ENCODE measurements at regions of chr22 and their contacts with region 1.

Region 1: DNA sequence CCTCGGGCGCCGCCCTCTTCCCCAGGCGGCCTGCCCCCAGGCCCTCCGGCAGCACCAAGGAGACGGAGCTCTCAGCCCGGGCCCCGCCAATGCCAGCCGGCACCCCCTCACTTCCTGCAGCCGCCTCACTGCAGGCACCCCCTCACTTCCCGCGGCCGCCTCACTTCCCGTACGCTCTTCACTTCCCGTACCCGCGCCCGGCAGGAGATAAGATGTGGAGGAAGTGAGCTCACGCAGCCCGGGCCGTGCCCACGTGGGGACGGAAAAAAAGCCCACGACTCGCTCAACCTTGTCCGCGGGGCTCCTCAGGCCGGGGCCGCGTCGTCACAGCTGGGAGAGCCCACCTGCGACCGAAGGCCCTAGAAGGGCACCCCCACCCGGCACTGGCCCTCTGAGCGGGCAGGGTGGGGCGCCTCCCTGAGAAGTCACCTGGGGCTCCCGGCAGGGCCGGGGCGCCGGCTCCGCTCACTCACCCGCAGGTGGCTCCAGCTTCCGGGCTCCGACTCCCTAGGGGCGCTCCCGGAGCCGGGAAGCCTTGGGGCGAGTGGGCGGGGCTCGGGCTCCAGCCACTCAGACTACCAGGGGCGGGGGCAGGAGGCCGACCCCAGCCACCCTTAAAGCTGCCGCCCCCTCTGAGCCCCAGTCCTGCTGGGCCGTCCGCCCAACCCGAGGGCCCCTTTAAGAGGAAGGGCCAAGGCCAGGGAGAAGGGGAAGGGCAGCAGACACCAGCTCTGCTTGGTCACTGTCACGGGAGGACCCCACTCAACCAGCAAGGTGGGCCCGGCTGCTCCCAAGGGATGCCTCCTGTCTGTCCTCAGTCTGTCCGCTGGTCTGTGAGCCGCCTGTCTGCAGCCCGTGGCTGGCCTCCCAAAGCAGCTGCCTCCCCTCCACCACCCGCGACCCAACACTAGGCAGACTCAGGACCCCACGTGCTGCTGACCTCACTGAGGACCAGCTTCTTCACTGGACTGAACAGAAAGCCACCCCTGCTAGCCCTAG is 31.4 kb downstream of the PISD start:
- DNase-seq: peak; percentile 93
- ATAC-seq: peak; percentile 82
- H3K4me3 Mint-ChIP-seq: peak overlapping the region; percentile 81
- H3K27ac Mint-ChIP-seq: peak overlapping the region; percentile 89
- H3K4me1 Mint-ChIP-seq: peaks cover 60% of the 10 kb centered on the region
- H3K27me3 Mint-ChIP-seq: no peaks in the 10 kb centered on the region

Region 2: GRCh38 chr22:31107178-31107893 is 523.3 kb before region 1 on chr22 and contains the start of gene SELENOM:
- CTCF ChIA-PET with region 1: no interaction called
- POLR2A ChIA-PET with region 1: no interaction called
- intact Hi-C with region 1: loop called in 1 of 2 experiments (anchors 5 kb)
- DNase-seq: peak; percentile 94
- ATAC-seq: peak; percentile 96
- H3K4me3 Mint-ChIP-seq: peak within 1 kb of the TSS; percentile 74
- H3K27ac Mint-ChIP-seq: peak within 1 kb of the TSS; percentile 60
- H3K4me1 Mint-ChIP-seq: peaks cover 19% of the 10 kb centered on the region
- H3K27me3 Mint-ChIP-seq: no peaks in the 10 kb centered on the region
- total RNA-seq, gene SELENOM: 8.8 to 12.2 TPM

Region 3: DNA sequence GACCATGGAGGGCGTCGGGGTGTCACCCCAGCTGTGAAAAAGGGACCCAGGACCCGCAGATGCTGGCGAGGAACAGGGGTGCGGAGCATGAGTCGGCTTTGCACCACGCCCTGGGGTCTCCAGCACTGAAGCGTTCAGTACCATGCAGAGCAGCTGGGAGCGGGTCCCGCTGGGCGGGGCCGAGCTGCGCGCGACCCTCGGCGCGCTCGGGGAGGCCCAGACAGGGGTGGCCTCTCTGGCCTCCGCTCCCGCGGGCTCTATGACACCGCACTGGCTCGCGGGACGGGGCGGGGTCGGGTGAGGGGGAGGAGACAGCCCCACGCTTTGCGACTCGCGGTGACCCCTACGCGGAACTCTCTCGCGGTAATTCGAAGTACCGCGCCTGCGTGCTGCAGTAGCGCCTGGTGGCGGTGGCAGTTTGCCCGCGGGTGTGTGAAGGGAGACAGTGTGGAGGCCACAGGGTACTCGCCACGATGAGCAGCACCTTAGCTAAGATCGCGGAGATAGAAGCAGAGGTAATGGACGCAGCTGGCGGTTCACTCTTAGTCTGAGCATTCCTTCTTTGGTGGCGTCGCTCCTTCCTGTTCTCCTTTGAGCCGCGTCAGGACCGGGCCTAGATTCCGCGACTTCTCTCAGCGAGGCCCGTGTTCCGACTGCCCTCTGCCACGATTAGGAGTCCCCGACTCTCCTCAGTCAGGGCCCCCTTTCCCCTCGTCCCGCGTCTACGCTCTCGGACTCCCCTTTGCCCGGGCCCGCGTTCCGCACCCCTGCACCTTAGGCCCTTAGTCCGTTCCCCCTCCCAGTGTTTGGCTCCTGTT is 231.2 kb before region 1 on chr22 and contains the start of gene DRG1:
- CTCF ChIA-PET with region 1: no interaction called
- POLR2A ChIA-PET with region 1: no interaction called
- intact Hi-C with region 1: loop called in 1 of 2 experiments (anchors 1 kb)
- DNase-seq: peak; percentile 99
- ATAC-seq: peak; percentile 98
- H3K4me3 Mint-ChIP-seq: peak within 1 kb of the TSS; percentile 99
- H3K27ac Mint-ChIP-seq: peak within 1 kb of the TSS; percentile 91
- H3K4me1 Mint-ChIP-seq: peaks cover 18% of the 10 kb centered on the region
- H3K27me3 Mint-ChIP-seq: peaks cover under 1% of the 10 kb centered on the region
- total RNA-seq, gene DRG1: 104 to 106 TPM

Region 4: GRCh38 chr22:31489604-31490495 is 140.8 kb before region 1 on chr22 and contains the start of gene EIF4ENIF1:
- CTCF ChIA-PET with region 1: interaction called, 5 read pairs
- POLR2A ChIA-PET with region 1: interaction called, 7 read pairs
- intact Hi-C with region 1: loop called in 1 of 2 experiments (anchors 2 kb)
- DNase-seq: peak; percentile 92
- ATAC-seq: peak; percentile 75
- H3K4me3 Mint-ChIP-seq: peak within 1 kb of the TSS; percentile 86
- H3K27ac Mint-ChIP-seq: peak within 1 kb of the TSS; percentile 99
- H3K4me1 Mint-ChIP-seq: peaks cover 46% of the 10 kb centered on the region
- H3K27me3 Mint-ChIP-seq: no peaks in the 10 kb centered on the region
- total RNA-seq, gene EIF4ENIF1: 45.4 to 75.0 TPM

Region 5: GRCh38 chr22:31561238-31561887 is 69.3 kb before region 1 on chr22:
- CTCF ChIA-PET with region 1: interaction called, 6 read pairs
- POLR2A ChIA-PET with region 1: no interaction called
- intact Hi-C with region 1: loop called (anchors 1 to 2 kb)
- DNase-seq: peak; percentile 81
- ATAC-seq: peak; percentile 96
- H3K4me3 Mint-ChIP-seq: no peak overlapping the region
- H3K27ac Mint-ChIP-seq: peak overlapping the region; percentile 43
- H3K4me1 Mint-ChIP-seq: peaks cover 2% of the 10 kb centered on the region
- H3K27me3 Mint-ChIP-seq: no peaks in the 10 kb centered on the region

Region 6: DNA sequence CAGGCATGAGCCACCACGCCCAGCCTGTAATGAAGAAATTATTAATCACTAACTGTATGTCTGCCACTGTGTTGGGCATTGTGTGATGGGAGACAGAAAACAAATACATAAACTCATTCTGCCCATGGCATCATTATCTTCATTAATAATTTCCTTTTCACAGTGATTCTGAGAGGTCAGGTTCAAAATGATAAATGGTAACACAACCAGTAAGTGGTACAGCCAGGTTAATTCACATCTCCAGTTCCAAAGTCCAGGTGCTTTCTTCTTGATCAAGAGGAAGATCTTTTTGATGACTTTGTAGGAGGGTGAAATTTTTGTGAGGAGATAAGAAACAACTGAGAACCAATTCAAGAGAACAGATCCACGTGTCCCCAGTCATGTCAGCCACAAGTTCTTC is 35.4 kb before region 1 on chr22:
- CTCF ChIA-PET with region 1: no interaction called
- POLR2A ChIA-PET with region 1: no interaction called
- intact Hi-C with region 1: no loop called
- DNase-seq: no peak
- ATAC-seq: no peak
- H3K4me3 Mint-ChIP-seq: no peak overlapping the region
- H3K27ac Mint-ChIP-seq: peak overlapping the region; percentile 12
- H3K4me1 Mint-ChIP-seq: no peaks in the 10 kb centered on the region
- H3K27me3 Mint-ChIP-seq: no peaks in the 10 kb centered on the region